MCF 10A (cell line): ENCODE measurements at regions of chr7 and their contacts with region 1.

Region 1: GRCh38 chr7:47818796-47819606 is 129.3 kb downstream of the PKD1L1 start:
- DNase-seq: peak; percentile 80
- H3K4me3 Mint-ChIP-seq: no peak overlapping the region
- H3K27ac Mint-ChIP-seq: no peak overlapping the region
- H3K4me1 Mint-ChIP-seq: peaks cover 7% of the 10 kb centered on the region
- H3K27me3 Mint-ChIP-seq: no peaks in the 10 kb centered on the region
- CTCF ChIP-seq: peak; percentile 94

Region 2: GRCh38 chr7:47435889-47436312 is 383.1 kb before region 1 on chr7:
- CTCF ChIA-PET with region 1: interaction called, 16 read pairs
- POLR2A ChIA-PET with region 1: interaction called, 3 read pairs
- intact Hi-C with region 1: loop called (anchors 1 kb)
- DNase-seq: peak; percentile 65
- H3K4me3 Mint-ChIP-seq: no peak overlapping the region
- H3K27ac Mint-ChIP-seq: no peak overlapping the region
- H3K4me1 Mint-ChIP-seq: peaks cover 12% of the 10 kb centered on the region
- H3K27me3 Mint-ChIP-seq: no peaks in the 10 kb centered on the region
- CTCF ChIP-seq: peak; percentile 59

Region 3: DNA sequence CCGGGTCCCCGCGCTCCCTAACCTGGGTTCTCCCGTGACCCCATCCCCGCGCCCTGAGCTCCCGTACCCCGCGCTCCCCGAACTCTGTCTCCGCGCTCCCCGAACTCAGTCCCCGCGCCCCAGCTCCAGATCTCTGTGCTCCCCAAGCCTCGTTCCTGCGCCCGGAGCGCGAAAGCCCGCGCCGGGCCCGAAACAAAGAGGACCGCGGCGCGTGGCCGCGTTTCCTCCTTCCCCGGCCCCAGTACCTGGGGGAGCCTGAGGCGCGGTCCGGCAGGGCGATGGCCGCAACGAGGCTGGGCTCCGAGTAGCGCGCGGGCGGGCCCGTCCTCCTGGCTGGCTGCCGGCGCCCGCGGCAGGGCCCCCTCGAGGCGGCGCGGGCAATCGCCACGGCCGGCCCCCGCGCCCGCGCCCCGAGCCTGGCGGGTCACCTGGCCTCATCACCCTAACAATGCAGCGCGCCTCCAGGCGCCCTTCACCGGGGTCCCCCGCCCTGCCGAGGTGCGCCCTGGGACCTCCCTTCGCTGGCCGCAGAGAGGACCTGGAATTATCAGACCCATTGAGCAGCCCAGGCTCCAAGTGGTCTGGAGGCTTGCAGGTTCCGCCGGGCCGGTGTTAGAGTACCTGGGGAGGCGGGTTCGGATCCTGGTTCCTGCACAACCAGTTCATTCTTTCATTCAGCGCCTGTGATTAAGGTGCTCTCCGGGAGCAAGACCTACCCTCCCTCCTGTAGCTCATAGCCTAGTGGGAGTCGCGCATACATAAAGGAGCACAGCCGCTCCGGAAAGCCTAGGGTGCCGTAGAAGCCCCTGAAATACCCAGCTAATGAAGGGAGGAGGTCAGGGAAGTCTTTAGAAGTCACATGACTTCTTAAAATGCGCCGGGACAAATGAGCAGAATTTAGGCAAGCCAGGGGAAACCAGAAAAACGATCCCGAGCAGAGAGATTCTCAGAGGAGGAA is 236.9 kb before region 1 on chr7 and contains the start of gene TNS3:
- CTCF ChIA-PET with region 1: interaction called, 5 read pairs
- POLR2A ChIA-PET with region 1: interaction called, 5 read pairs
- intact Hi-C with region 1: loop called (anchors 2 kb)
- DNase-seq: no peak
- H3K4me3 Mint-ChIP-seq: peak within 1 kb of the TSS; percentile 94
- H3K27ac Mint-ChIP-seq: peak within 1 kb of the TSS; percentile 92
- H3K4me1 Mint-ChIP-seq: peaks cover 35% of the 10 kb centered on the region
- H3K27me3 Mint-ChIP-seq: no peaks in the 10 kb centered on the region
- CTCF ChIP-seq: peak; percentile 15
- total RNA-seq, gene TNS3: 30.1 and 33.3 TPM in 2 replicates

Region 4: GRCh38 chr7:47720141-47720906 is 98.7 kb before region 1 on chr7:
- CTCF ChIA-PET with region 1: no interaction called
- POLR2A ChIA-PET with region 1: no interaction called
- intact Hi-C with region 1: no loop called
- DNase-seq: peak; percentile 14
- H3K4me3 Mint-ChIP-seq: no peak overlapping the region
- H3K27ac Mint-ChIP-seq: no peak overlapping the region
- H3K4me1 Mint-ChIP-seq: peaks cover 13% of the 10 kb centered on the region
- H3K27me3 Mint-ChIP-seq: no peaks in the 10 kb centered on the region
- CTCF ChIP-seq: no peak

Region 5: GRCh38 chr7:47757921-47758411 is 61.0 kb before region 1 on chr7:
- CTCF ChIA-PET with region 1: interaction called, 5 read pairs
- POLR2A ChIA-PET with region 1: no interaction called
- intact Hi-C with region 1: loop called (anchors 1 kb)
- DNase-seq: peak; percentile 82
- H3K4me3 Mint-ChIP-seq: peak overlapping the region; percentile 2
- H3K27ac Mint-ChIP-seq: peak overlapping the region; percentile 100
- H3K4me1 Mint-ChIP-seq: peaks cover 39% of the 10 kb centered on the region
- H3K27me3 Mint-ChIP-seq: no peaks in the 10 kb centered on the region
- CTCF ChIP-seq: no peak

Region 6: DNA sequence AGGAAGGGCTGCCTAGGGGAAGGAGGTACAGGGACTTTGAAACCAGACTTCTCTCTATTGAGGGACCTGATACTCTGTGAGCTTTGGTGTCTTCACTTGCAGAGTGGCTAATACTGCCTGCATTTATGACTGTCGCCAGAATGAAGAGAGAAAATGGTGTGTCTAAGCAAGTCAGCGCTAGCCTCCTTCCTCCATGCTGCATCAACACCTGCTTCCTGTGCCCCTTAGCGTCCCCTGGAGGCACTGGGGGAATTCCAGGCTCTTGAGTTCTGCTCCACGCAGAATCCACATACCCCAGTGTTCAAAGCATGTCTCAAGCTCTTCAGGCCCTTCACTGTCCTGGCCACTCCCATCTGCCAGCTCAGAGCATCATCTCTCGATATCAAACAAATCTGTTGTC is 11.2 kb before region 1 on chr7:
- CTCF ChIA-PET with region 1: interaction called, 21 read pairs
- POLR2A ChIA-PET with region 1: interaction called, 3 read pairs
- intact Hi-C with region 1: no loop called
- DNase-seq: no peak
- H3K4me3 Mint-ChIP-seq: no peak overlapping the region
- H3K27ac Mint-ChIP-seq: no peak overlapping the region
- H3K4me1 Mint-ChIP-seq: peaks cover 6% of the 10 kb centered on the region
- H3K27me3 Mint-ChIP-seq: no peaks in the 10 kb centered on the region
- CTCF ChIP-seq: no peak

Region 7: DNA sequence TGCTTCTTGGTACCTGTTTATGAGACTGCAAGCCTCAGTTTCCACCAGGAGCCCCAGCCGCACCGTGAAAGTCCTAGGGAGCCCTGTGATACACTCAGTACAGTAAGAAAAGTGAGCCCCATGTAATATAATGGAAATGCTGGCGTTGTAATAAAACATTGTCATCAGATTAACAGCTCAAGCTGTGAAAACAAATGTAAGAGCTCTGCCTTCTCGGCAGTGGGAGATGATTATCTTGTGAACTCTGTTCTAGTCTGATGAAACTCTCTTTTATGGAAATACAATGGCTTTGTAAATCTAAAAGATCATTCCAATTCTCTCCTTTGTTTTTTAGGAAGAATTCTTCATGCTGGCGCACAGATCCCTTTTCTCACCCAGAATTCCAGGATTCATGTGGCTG is 652.2 kb after region 1 on chr7:
- CTCF ChIA-PET with region 1: no interaction called
- POLR2A ChIA-PET with region 1: no interaction called
- intact Hi-C with region 1: no loop called
- DNase-seq: no peak
- H3K4me3 Mint-ChIP-seq: no peak overlapping the region
- H3K27ac Mint-ChIP-seq: no peak overlapping the region
- H3K4me1 Mint-ChIP-seq: no peaks in the 10 kb centered on the region
- H3K27me3 Mint-ChIP-seq: peaks cover 10% of the 10 kb centered on the region
- CTCF ChIP-seq: no peak